A549 (cell line): ENCODE measurements at regions of chr9 and their contacts with region 1.

Region 1: GRCh38 chr9:126704873-126705766 is 91.4 kb downstream of the LMX1B start:
- DNase-seq: peak; percentile 71 to 84
- ATAC-seq: peak; percentile 48 to 82
- H3K4me3 ChIP-seq: peak overlapping the region; percentile 26
- H3K27ac ChIP-seq: peak overlapping the region; percentile 56 to 75; a peak in 5 of 6 replicates
- H3K4me1 ChIP-seq: peaks cover 12% of the 10 kb centered on the region
- CTCF ChIP-seq: peak; percentile 80
- EP300 ChIP-seq: no peak
- POLR2A ChIP-seq: no peak
- RAD21 ChIP-seq: peak; percentile 60 to 64; a peak in 4 of 5 replicates

Region 2: DNA sequence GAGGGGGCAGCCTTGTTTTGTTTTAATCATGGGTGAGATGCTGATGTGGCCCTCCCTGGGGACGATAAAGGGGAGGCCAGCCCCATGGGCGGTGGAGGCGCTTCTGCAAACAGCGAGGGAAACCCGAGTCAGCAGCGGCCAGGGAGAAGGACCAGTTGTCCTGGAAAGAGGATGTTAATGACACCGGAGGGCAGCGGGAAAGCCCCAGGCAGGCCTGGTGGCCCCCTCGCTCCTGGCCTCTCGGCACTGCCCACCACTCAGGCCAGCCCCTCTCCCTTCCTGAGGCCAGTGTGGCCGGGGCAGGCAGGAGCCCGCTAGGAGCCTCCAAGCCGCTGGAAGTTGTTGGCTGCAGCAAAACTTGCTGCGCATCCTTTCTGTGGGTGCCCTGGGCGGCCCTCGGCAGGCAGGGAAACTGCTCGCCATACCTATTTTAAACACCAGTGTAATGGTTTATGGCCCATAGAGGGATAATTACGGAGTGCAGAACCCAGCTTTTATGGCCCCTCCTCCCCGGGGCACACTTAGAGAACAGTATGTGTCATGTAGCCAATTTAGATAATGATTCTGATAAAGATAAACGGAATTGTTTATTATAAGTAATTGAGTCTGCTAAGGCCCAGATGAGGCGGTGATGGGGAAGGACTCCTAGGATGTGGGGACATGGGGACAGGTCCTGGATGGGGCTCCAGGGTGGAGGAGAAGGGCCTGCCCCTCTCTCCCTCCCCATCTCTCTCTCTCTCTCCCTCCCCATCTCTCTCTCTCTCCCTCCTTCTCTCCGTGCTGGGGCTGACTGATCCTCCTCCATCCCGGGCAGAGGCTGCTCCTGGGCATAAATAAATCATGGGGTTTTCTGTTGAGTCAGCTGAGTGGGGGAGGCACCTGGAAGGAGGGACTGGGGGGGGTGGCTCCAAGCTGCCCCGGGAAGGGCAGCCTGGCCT is 54.4 kb before region 1 on chr9:
- CTCF ChIA-PET with region 1: interaction called, 10 read pairs
- POLR2A ChIA-PET with region 1: no interaction called
- DNase-seq: no peak
- ATAC-seq: no peak
- H3K4me3 ChIP-seq: no peak overlapping the region
- H3K27ac ChIP-seq: no peak overlapping the region
- H3K4me1 ChIP-seq: no peaks in the 10 kb centered on the region
- CTCF ChIP-seq: no peak
- EP300 ChIP-seq: no peak
- POLR2A ChIP-seq: no peak
- RAD21 ChIP-seq: no peak

Region 3: GRCh38 chr9:126676685-126677143 is 28.4 kb before region 1 on chr9:
- CTCF ChIA-PET with region 1: interaction called, 11 read pairs
- POLR2A ChIA-PET with region 1: no interaction called
- DNase-seq: no peak
- ATAC-seq: no peak
- H3K4me3 ChIP-seq: no peak overlapping the region
- H3K27ac ChIP-seq: no peak overlapping the region
- H3K4me1 ChIP-seq: no peaks in the 10 kb centered on the region
- CTCF ChIP-seq: no peak
- EP300 ChIP-seq: no peak
- POLR2A ChIP-seq: no peak
- RAD21 ChIP-seq: no peak

Region 4: DNA sequence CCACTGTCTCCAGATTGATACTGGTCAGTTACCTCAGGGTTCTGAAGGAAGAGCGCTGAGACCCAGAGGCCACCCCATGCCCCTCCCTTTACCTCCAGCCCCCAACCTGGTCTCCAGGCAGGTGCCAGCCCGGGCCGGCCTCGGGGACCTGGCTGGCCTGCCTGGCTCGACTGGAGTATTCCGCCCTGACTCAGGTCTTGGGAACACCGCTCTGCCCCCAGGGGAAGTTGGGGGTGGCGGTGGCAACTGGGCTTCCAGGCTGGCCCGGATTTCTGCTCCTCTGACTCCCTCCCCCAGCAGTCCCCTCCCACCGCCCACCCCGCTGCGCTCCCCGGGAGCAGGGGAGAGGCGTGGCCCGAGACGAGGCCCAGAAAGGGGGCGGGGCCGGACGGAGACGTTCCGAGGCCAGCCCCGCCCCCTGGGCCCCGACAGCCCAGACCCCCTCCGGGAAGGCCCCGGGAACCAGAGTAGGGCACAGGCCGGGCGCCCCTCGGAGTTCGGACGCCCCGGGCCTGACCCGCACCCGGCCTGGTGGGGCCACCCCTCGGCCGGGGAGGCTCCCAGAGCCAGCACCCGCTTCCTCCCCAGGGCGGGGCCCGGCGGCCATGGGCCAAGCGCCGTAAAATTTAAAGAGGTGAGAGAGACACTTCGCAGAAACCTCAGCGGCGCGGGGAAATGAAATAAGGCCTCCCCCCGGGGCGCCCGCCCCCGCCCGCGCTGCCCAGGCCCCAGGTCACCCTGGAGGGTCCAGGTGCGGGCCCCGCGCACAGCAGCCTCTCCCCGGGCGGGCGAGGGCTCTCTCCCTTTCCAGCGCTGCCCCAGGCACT is 17.3 kb after region 1 on chr9:
- CTCF ChIA-PET with region 1: interaction called, 114 read pairs
- POLR2A ChIA-PET with region 1: no interaction called
- DNase-seq: peak; percentile 62 to 66
- ATAC-seq: peak; percentile 89 to 96
- H3K4me3 ChIP-seq: peak overlapping the region; percentile 86
- H3K27ac ChIP-seq: peak overlapping the region; percentile 90 to 93
- H3K4me1 ChIP-seq: 0 out of 3 replicates have a peak, but pooled peaks cover 5% of the 10 kb centered on the region
- CTCF ChIP-seq: no peak
- EP300 ChIP-seq: no peak
- POLR2A ChIP-seq: no peak
- RAD21 ChIP-seq: no peak

Region 5: DNA sequence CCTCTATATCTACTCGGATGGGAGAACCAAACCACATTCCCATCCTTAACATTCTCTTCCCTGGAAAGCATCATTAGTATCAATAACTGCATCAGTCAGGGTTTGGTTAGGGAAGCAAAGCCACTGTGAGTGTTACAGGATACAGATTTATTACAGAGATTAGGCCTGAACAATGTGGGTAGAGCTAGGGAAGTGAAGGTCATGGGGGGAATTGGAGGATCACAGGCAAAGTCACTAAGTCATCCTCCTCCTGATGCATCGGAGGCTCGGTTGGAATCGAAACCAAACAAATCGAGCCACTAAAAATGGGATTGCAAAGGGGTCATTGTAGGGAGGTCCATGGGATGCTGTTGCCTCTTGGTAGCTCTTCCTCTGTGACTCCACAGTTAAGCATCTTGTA is 37.9 kb after region 1 on chr9:
- CTCF ChIA-PET with region 1: interaction called, 15 read pairs
- POLR2A ChIA-PET with region 1: no interaction called
- DNase-seq: no peak
- ATAC-seq: no peak
- H3K4me3 ChIP-seq: no peak overlapping the region
- H3K27ac ChIP-seq: no peak overlapping the region
- H3K4me1 ChIP-seq: no peaks in the 10 kb centered on the region
- CTCF ChIP-seq: no peak
- EP300 ChIP-seq: no peak
- POLR2A ChIP-seq: no peak
- RAD21 ChIP-seq: no peak

Region 6: DNA sequence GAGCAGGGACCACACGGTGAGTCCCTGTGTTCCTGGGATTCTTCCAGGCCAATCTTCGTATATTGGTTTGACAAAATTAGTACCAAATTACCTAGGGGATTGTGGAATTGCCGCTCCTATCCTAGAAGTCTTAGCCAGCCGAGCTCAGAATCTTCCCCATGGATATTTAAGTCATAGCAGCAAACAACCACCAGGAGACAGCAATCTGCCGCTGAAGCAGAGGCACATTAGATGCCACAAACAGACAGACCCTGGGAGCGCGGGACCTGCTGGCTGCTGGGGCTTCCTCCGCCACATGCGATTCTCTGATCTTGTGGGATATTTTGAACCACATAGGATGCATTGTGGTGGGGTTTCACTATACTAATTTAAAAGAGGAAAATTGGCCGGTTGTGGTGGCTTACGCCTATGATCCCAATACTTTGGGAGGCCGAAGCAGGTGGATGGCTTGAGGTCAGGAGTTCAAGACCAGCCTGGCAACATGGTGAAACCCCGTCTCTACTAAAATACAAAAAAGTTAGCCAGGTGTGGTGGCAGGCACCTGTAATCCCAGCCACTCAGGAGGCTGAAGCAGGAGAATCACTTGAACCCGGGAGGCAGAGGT is 68.0 kb after region 1 on chr9:
- CTCF ChIA-PET with region 1: interaction called, 338 read pairs
- POLR2A ChIA-PET with region 1: no interaction called
- DNase-seq: peak; percentile 56 to 65
- ATAC-seq: peak; percentile 90 to 93; a peak in 5 of 6 replicates
- H3K4me3 ChIP-seq: no peak overlapping the region
- H3K27ac ChIP-seq: no peak overlapping the region
- H3K4me1 ChIP-seq: no peaks in the 10 kb centered on the region
- CTCF ChIP-seq: peak; percentile 40; the same call in 2 of the 3 replicates
- EP300 ChIP-seq: no peak
- POLR2A ChIP-seq: no peak
- RAD21 ChIP-seq: peak; percentile 50 to 53; a peak in 3 of 5 replicates

Region 7: GRCh38 chr9:126791406-126792151 is 86.5 kb after region 1 on chr9:
- CTCF ChIA-PET with region 1: interaction called, 338 read pairs
- POLR2A ChIA-PET with region 1: no interaction called
- DNase-seq: peak; percentile 87 to 90
- ATAC-seq: peak; percentile 89 to 90
- H3K4me3 ChIP-seq: no peak overlapping the region
- H3K27ac ChIP-seq: peak overlapping the region; percentile 75 to 90
- H3K4me1 ChIP-seq: peaks cover 59% of the 10 kb centered on the region
- CTCF ChIP-seq: no peak
- EP300 ChIP-seq: peak; percentile 70 to 87; a peak in 2 of 5 replicates
- POLR2A ChIP-seq: no peak
- RAD21 ChIP-seq: no peak; a peak in 1 of 5 replicates